ENCODE measurements at regions of chr5 and their contacts with region 1.

Region 1: DNA sequence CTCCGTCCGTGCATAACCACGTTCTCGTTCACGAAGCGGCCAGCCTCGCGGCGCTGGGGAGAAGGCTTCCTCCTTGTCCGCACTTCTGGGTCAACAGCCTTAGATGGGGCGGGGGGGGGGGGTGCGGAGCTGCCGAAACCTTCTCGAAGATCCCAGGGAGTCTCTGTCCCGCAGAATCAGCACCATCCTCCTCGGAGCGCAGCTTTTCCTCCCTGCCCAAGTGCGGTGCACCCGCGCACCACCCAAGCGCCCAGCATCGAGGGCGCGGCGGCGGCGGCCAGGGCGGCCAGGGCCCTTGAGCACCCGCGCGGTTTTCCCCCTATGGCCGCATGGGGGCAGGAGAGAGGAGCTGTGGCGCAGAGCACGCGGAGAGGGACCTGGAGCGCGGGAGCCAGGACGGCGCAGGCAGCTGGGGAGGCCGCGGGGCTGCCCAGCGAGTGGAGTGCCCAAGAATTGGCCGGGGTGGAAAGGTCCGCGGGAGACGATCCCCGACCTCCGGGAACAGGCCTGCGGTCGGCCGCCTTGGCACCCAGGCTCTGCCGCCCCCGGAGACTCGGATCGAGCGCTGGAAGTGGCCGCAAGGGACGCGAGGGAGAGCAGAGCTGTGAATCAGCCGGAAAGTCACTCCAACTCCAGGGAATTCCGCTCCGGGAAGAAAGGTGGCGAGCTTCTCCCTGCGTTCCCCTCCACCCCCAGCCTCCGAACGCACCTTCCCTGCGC is 43.1 kb downstream of the TMEM174 start:
- DNase-seq: peak; percentile 76
- ATAC-seq: peak; percentile 99 to 100

Region 2: GRCh38 chr5:73274866-73275663 is 59.0 kb after region 1 on chr5:
- intact Hi-C with region 1: loop called in 1 of 2 experiments (anchors 10 kb)
- DNase-seq: peak; percentile 29
- ATAC-seq: peak; percentile 75 to 76

Region 3: GRCh38 chr5:73448463-73449136 is 232.5 kb after region 1 on chr5 and contains the start of gene FOXD1:
- intact Hi-C with region 1: loop called (anchors 5 to 10 kb)
- DNase-seq: peak; percentile 53
- ATAC-seq: peak; percentile 73 to 85
- total RNA-seq, gene FOXD1: 0.09 to 0.10 TPM

Region 4: GRCh38 chr5:73454351-73455036 is 238.4 kb after region 1 on chr5:
- intact Hi-C with region 1: loop called (anchors 5 to 10 kb)
- DNase-seq: no peak
- ATAC-seq: peak in 1 of 2 donors; percentile 65

Measured in left cardiac atrium (tissue), 4 donors.